Activated CD4-positive, alpha-beta memory T cell treated with anti-CD3 and anti-CD28 coated beads for 36 hours (primary cell): ENCODE measurements at regions of chr6 and their contacts with region 1.

Region 1: DNA sequence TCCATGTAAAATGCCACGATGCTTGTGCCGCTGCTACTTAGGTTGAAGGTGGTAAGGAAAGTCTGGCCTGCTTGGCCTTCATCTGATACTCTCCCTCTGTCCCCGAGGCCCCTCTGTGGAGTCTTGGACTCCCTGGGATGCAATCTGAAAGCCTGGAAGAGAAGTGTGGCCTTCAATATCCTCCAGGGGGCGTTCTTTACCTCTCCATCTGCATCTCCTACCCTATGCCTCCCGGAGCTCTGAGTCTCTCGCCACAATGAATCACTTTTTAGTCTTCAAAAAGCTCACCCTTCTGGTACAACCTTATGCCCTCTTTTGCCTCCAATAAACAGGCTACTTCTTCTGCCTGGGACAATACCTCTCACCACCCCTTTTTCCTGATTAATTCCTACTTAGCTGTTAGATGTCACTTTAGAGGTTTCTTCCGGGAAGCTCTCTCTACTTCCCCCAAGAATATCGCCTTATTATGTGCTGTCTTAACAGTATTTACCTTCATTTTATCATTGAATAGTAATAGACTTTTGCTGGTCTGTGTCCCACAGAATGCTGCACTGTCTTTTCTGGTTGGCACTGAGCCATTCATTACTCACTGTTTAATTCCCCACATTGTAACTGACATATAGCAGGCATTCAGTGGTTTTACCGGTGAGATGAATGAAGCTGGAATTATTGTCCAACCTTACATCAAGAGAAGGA is 13.9 kb upstream of the ATG5 start:
- DNase-seq: peak; percentile 63
- H3K4me3 Mint-ChIP-seq: no peak overlapping the region
- H3K27ac Mint-ChIP-seq: no peak overlapping the region
- H3K4me1 Mint-ChIP-seq: peaks cover 3% of the 10 kb centered on the region
- H3K27me3 Mint-ChIP-seq: peaks cover 29% of the 10 kb centered on the region

Region 2: GRCh38 chr6:106141441-106142237 is 197.8 kb before region 1 on chr6:
- CTCF ChIA-PET with region 1: no interaction called
- POLR2A ChIA-PET with region 1: no interaction called
- intact Hi-C with region 1: no loop called
- DNase-seq: peak; percentile 80
- H3K4me3 Mint-ChIP-seq: peak overlapping the region; percentile 10
- H3K27ac Mint-ChIP-seq: peak overlapping the region; percentile 83
- H3K4me1 Mint-ChIP-seq: peaks cover 49% of the 10 kb centered on the region
- H3K27me3 Mint-ChIP-seq: no peaks in the 10 kb centered on the region

Region 3: DNA sequence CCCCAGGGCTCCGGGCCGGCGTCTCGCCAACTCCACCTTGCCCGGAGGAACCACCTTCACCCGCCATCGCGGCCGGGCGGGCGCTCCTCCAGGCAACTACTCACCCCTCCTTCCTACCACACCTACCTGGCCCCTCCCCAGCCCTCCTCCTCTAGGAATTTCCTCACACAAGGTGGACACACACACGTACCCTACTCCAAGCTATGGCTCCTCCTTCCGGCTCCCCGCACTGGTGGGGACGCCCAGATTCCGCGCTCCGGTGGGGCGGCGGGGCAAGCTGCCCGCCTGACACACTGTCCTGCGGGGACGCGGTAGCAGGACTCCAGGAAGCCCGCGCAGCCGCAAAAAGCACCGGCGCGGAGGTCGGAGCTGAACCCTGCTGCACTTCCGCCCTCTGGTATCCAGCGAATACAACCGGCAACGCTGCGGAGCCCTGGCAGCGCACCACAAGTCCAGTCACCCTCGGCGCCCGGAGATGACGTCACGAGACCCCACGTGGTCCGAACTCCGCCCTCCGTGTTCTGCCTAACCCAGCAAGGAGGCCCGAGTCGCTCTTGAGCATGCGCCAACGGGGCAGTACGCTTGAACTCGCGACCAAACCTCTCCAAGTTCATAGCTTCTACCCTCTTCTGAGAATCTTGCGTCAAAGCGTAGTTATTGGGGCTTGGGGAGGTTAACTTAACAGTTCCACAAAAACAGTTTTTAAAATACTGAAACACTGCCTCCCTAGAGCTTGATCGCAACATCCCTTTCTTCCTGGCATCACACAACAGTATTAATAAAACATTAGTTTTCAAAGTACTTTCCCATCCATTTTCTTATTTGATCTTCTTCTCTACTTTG is 13.9 kb before region 1 on chr6 and contains the start of gene ATG5:
- CTCF ChIA-PET with region 1: interaction called, 13 read pairs
- POLR2A ChIA-PET with region 1: interaction called, 5 read pairs
- intact Hi-C with region 1: no loop called
- DNase-seq: peak; percentile 100
- H3K4me3 Mint-ChIP-seq: peak within 1 kb of the TSS; percentile 96
- H3K27ac Mint-ChIP-seq: peak within 1 kb of the TSS; percentile 94
- H3K4me1 Mint-ChIP-seq: peaks cover 38% of the 10 kb centered on the region
- H3K27me3 Mint-ChIP-seq: peaks cover 3% of the 10 kb centered on the region
- total RNA-seq, gene ATG5: 29.2 TPM

Region 4: GRCh38 chr6:106360410-106360988 is 21.0 kb after region 1 on chr6 and contains the start of gene CRYBG1:
- CTCF ChIA-PET with region 1: interaction called, 11 read pairs
- POLR2A ChIA-PET with region 1: no interaction called
- intact Hi-C with region 1: no loop called
- DNase-seq: peak; percentile 83
- H3K4me3 Mint-ChIP-seq: peak within 1 kb of the TSS; percentile 68
- H3K27ac Mint-ChIP-seq: no peak within 1 kb of the TSS
- H3K4me1 Mint-ChIP-seq: peaks cover 9% of the 10 kb centered on the region
- H3K27me3 Mint-ChIP-seq: peaks cover 37% of the 10 kb centered on the region
- total RNA-seq, gene CRYBG1: 38.4 to 39.3 TPM

Region 5: GRCh38 chr6:106372838-106373501 is 33.5 kb after region 1 on chr6:
- CTCF ChIA-PET with region 1: interaction called, 14 read pairs
- POLR2A ChIA-PET with region 1: no interaction called
- intact Hi-C with region 1: no loop called
- DNase-seq: no peak
- H3K4me3 Mint-ChIP-seq: no peak overlapping the region
- H3K27ac Mint-ChIP-seq: peak overlapping the region; percentile 38
- H3K4me1 Mint-ChIP-seq: peaks cover 11% of the 10 kb centered on the region
- H3K27me3 Mint-ChIP-seq: peaks cover 4% of the 10 kb centered on the region

Region 6: DNA sequence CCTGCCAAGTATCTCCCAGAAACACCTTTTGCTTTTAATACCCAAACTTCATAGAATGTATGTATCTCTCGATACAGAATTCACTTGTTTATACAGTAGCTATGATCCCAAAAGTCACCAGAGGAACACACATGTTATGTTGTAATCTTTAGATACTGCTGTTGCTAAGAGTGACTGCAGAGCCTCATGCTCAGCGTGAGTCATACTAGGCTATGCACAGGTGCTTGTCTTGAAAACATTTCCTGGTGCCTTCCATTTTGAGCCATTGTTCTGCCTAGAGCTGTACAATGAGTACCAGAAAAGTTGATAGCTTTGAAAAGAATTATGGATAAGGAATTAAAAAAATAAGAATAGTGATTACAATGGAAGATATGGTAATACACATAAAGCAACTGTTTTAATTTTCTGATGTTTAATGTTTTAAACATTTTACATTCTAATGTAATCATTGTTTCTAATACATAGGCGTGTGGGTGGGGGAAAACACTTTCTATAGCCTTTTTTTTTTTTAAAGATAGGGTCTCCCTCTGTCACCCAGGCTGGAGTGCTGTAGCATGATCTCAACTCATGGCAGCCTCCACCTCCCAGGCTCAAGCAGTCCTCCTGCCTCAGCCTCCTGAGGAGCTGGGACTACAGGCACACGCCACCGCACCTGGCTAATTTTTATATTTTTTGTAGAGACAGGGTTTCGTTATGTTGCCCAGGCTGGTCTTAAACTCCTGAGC is 555.7 kb after region 1 on chr6:
- CTCF ChIA-PET with region 1: no interaction called
- POLR2A ChIA-PET with region 1: no interaction called
- intact Hi-C with region 1: no loop called
- DNase-seq: no peak
- H3K4me3 Mint-ChIP-seq: no peak overlapping the region
- H3K27ac Mint-ChIP-seq: no peak overlapping the region
- H3K4me1 Mint-ChIP-seq: no peaks in the 10 kb centered on the region
- H3K27me3 Mint-ChIP-seq: peaks cover 25% of the 10 kb centered on the region

Region 7: DNA sequence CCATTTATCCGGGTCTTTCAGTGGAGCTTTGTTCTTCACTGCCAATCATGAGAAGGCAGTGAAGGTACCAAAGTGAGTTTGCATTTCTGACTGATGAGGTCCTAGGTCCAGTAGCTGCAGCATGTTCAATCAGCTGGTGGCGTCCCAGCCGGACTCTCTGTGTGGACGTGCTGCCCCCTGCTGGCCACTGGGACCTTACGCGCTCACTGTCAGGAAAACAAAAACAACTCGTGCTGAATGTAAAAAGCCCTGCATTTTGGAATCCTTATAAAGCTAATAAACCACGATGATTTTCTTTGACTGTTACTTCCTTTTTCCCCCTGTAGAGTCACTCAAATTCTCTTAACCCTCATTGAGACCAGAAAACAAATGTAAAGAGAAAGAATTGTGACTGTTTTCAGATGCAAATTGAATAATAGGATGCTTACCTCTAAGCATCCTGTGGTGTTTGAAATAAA is 640.0 kb after region 1 on chr6:
- CTCF ChIA-PET with region 1: interaction called, 21 read pairs
- POLR2A ChIA-PET with region 1: no interaction called
- intact Hi-C with region 1: loop called (anchors 1 kb)
- DNase-seq: peak; percentile 86
- H3K4me3 Mint-ChIP-seq: no peak overlapping the region
- H3K27ac Mint-ChIP-seq: no peak overlapping the region
- H3K4me1 Mint-ChIP-seq: peaks cover 7% of the 10 kb centered on the region
- H3K27me3 Mint-ChIP-seq: peaks cover 29% of the 10 kb centered on the region

Region 8: DNA sequence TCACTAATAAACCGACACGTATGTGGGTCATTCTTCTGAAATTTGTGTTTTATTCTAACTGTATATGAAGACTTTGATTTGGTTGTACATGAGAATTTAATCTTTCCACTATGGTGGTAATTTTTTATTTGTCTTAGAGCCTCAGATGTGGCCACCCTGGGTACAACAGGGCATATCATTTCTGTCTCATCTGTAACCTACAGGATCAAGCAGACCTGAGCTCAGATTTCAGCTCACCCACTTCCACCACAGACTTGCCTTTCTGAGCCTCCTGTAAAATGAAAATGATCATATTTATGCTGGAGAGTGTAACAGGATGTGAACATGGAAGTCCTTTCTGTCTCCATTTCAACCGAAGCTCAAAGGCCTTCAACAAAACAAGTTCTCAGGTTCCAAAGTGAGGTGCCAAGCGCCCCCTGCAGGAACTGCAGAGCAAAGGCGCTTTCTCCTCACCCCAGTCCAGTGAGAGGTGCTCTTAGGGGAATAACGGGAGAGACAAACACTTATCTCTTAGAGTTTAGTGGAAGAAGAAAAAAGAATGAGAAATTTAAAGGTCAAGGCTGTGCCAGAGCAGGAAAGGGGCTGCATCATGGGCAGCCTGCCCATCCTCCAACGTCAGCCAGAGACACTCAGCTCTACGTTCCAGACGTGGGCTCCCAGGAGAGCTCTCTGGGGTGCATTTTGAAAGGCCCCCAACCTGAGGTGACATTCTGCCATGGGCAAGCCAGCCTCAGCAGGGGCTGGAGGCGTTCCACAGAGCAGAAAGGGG is 658.1 kb after region 1 on chr6:
- CTCF ChIA-PET with region 1: interaction called, 21 read pairs
- POLR2A ChIA-PET with region 1: no interaction called
- intact Hi-C with region 1: no loop called
- DNase-seq: peak; percentile 76
- H3K4me3 Mint-ChIP-seq: no peak overlapping the region
- H3K27ac Mint-ChIP-seq: no peak overlapping the region
- H3K4me1 Mint-ChIP-seq: peaks cover 5% of the 10 kb centered on the region
- H3K27me3 Mint-ChIP-seq: no peaks in the 10 kb centered on the region

Region 9: GRCh38 chr6:107877968-107878367 is 1538.5 kb after region 1 on chr6:
- CTCF ChIA-PET with region 1: no interaction called
- POLR2A ChIA-PET with region 1: no interaction called
- intact Hi-C with region 1: no loop called
- DNase-seq: no peak
- H3K4me3 Mint-ChIP-seq: no peak overlapping the region
- H3K27ac Mint-ChIP-seq: no peak overlapping the region
- H3K4me1 Mint-ChIP-seq: no peaks in the 10 kb centered on the region
- H3K27me3 Mint-ChIP-seq: no peaks in the 10 kb centered on the region